GM10248 (cell line): ENCODE measurements at regions of chr11 and their contacts with region 1.

Region 1: GRCh38 chr11:35223371-35223796 is 84.4 kb downstream of the CD44 start:
- DNase-seq: no peak
- CTCF ChIP-seq: no peak

Region 2: GRCh38 chr11:34850343-34850742 is 373.0 kb before region 1 on chr11:
- CTCF ChIA-PET with region 1: no interaction called
- POLR2A ChIA-PET with region 1: no interaction called
- DNase-seq: no peak
- CTCF ChIP-seq: no peak

Region 3: GRCh38 chr11:35182317-35182939 is 41.0 kb before region 1 on chr11:
- CTCF ChIA-PET with region 1: no interaction called
- POLR2A ChIA-PET with region 1: no interaction called
- DNase-seq: peak; percentile 35
- CTCF ChIP-seq: no peak

Region 4: DNA sequence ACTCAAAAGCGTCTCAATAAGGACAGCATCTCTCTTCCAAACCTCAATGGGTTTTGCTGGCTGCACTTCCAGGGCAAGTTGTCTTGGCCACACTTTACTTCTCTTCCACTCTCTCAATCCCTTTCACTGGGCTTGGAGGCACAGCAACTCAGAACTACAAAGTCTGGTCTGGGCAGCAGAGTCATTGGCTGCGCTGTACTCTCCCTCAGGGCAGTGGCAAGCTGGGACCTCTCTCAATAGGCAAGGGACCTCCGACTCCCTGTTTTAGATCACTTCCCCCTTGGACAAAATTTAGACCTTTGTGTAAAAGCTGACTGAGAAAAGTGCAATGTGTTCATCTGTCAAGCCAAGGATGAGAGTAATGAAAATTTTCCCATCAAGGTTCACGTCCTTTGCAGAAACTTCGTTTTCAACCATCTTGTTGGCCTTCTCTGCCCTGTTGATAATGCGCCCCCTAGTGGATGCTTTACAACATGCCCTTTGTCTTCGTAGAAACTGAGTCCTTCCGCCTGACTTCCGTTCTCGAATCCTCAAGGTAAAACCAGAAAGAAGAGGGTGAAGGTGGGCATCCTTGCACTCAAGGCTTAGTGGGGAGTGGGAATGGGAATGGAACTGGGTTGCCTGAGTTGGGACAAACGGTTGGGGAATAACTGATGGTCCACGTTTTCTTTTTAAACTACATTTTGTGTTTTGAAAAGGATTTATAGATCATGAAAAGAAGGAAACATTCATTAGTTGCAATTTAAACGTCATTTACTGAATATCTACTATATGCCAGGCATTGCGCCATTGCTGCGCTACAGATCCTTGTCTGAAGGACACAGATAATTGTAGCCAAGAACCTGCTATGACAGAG is 14.7 kb after region 1 on chr11:
- CTCF ChIA-PET with region 1: interaction called, 47 read pairs
- POLR2A ChIA-PET with region 1: no interaction called
- DNase-seq: peak; percentile 34
- CTCF ChIP-seq: peak; percentile 52